ENCODE measurements at regions of chr3 and their contacts with region 1.

Region 1: DNA sequence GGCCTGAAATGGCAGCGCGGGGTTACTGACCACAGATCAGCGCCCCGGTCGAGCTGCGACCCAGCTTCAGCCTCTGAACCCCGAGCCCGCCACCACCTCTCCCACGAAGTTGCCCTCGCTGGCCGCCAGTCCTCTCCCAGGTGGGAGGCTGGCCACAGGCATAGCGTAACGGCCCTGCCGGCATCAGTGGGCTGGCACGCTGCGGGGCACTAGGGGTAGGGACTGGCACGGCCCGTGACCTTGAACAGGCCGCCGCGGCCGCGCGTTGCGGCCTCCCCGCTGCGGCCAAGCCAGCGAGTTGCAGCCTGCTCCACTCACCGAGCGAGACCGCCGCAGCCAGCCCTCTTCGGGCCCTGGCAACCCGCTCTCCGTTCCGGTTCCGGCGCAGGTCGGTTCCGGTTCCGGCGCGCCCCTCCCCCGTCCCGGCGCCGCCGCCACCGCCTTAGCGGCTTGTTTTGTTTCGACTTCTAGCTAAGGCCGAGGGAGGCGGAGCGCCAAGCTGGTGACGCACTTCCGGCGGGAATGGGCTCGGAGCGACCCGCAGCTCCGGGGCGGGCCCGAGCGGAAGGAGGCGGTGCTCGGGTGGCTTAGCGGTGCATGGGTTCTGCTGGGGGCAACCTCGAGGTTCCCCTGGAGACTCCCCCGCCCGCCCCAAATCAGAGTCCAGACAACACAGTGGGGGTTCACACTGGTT is at the start of gene USP19:
- DNase-seq: peak; percentile 97
- ATAC-seq: peak; percentile 95
- H3K4me3 ChIP-seq: peak within 1 kb of the TSS; percentile 67 to 85 (median 74)
- H3K4me3 Mint-ChIP-seq: peak within 1 kb of the TSS; percentile 88
- H3K27ac ChIP-seq: peak within 1 kb of the TSS; percentile 82 to 92
- H3K27ac Mint-ChIP-seq: peak within 1 kb of the TSS; percentile 89
- H3K4me1 ChIP-seq: peaks cover 12 to 21% of the 10 kb centered on the region in 2 donors
- H3K4me1 Mint-ChIP-seq: peaks cover 15% of the 10 kb centered on the region
- H3K27me3 ChIP-seq: no peaks in the 10 kb centered on the region
- H3K27me3 Mint-ChIP-seq: no peaks in the 10 kb centered on the region
- CTCF ChIP-seq: no peak
- total RNA-seq, gene USP19: 87.3 and 89.9 TPM in 2 replicates

Region 2: DNA sequence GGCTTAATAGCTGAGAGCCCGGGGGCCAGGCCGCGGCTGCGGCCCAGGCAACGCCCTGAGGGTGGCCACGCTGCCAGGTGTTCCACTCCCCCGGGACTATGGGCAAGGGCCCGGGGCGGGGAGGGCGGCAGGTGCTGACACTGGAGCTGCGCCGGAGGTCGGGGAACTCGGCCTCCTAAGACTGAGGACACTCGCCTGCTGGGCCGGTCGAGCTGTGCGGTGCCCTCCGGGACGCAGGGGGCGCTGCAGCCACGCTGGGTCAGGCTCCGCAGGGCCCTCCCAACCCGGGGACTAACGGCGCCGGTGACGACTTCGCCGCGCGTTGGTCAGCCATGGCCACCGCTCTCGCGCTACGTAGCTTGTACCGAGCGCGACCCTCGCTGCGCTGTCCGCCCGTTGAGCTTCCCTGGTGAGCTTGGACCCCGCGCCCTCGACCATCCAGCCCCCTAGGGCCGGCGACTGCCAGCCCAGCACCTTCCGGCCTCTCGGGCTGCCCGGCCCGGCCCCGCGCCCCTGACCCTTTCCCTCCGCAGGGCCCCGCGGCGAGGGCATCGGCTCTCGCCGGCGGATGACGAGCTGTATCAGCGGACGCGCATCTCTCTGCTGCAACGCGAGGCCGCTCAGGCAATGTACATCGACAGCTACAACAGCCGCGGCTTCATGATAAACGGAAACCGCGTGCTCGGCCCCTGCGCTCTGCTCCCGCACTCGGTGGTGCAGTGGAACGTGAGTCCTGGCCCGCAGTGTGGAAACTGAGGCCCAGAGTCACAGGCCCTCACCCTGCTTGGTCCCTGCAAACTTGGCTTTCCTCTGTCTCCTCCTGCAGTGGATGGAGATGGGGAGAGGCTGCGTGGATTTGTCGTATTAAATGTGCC is 98.5 kb before region 1 on chr3 and contains the start of gene NDUFAF3:
- CTCF ChIA-PET with region 1: no interaction called
- POLR2A ChIA-PET with region 1: interaction called, 14 read pairs
- intact Hi-C with region 1: loop called (anchors 1 kb)
- DNase-seq: peak; percentile 96
- ATAC-seq: peak; percentile 66
- H3K4me3 ChIP-seq: peak within 1 kb of the TSS; percentile 66 to 92 (median 89)
- H3K4me3 Mint-ChIP-seq: peak within 1 kb of the TSS; percentile 96
- H3K27ac ChIP-seq: peak within 1 kb of the TSS; percentile 96 to 98
- H3K27ac Mint-ChIP-seq: peak within 1 kb of the TSS; percentile 97
- H3K4me1 ChIP-seq: peaks cover 36 to 60% of the 10 kb centered on the region in 2 donors
- H3K4me1 Mint-ChIP-seq: peaks cover 65% of the 10 kb centered on the region
- H3K27me3 ChIP-seq: no peaks in the 10 kb centered on the region
- H3K27me3 Mint-ChIP-seq: no peaks in the 10 kb centered on the region
- CTCF ChIP-seq: peak; percentile 95
- total RNA-seq, gene NDUFAF3: 67.0 and 67.5 TPM in 2 replicates

Region 3: GRCh38 chr3:49032646-49033304 is 87.8 kb before region 1 on chr3:
- CTCF ChIA-PET with region 1: no interaction called
- POLR2A ChIA-PET with region 1: no interaction called
- intact Hi-C with region 1: no loop called
- DNase-seq: no peak
- ATAC-seq: no peak
- H3K4me3 ChIP-seq: no peak overlapping the region
- H3K4me3 Mint-ChIP-seq: no peak overlapping the region
- H3K27ac ChIP-seq: no peak overlapping the region
- H3K27ac Mint-ChIP-seq: no peak overlapping the region
- H3K4me1 ChIP-seq: peaks cover 11 to 20% of the 10 kb centered on the region in 2 donors
- H3K4me1 Mint-ChIP-seq: peaks cover 20% of the 10 kb centered on the region
- H3K27me3 ChIP-seq: no peaks in the 10 kb centered on the region
- H3K27me3 Mint-ChIP-seq: no peaks in the 10 kb centered on the region
- CTCF ChIP-seq: no peak

Region 4: DNA sequence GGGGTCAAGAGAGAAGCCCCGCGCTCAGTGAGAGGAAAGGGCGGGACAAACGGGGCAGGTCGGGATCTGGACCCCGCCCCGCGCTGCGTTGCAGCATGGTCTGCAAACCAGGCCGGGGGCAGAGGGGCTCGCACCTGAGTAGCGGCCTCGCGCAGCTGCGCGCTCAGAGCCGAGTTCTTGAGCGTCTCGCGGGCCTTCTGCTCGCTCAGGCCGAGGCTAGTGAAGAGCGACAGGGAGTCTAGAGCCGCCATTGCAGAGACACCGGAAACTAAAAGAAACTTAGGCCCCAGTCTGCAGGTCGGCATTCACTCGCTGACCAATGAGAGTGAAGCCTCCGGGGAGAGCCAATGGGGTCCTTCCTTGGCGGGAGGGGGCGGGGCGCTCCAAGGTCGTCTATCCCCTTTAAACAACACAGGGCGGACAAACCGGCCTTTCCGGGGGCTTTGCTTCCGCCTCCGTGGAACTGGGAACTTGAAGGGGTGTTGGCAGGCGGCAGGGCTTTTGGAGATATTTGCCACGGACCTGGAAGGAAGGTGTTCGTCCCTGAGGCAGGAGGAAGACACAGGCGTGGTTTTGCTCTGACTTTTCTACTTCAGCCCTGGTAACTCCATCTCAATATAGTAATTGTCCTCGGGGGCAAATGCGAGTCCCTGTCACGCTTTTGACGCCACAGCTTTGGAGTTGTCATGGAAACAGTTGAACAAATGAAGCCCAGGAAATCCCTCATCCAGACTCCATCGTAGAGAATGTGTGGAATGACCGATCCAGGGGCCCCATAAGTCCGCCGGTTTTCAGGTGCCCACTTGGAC is 15.9 kb before region 1 on chr3 and contains the start of gene QARS1:
- CTCF ChIA-PET with region 1: interaction called, 4 read pairs
- POLR2A ChIA-PET with region 1: interaction called, 7 read pairs
- intact Hi-C with region 1: loop called (anchors 1 kb)
- DNase-seq: peak; percentile 90
- ATAC-seq: peak; percentile 99
- H3K4me3 ChIP-seq: peak within 1 kb of the TSS; percentile 72 to 98 (median 93)
- H3K4me3 Mint-ChIP-seq: peak within 1 kb of the TSS; percentile 95
- H3K27ac ChIP-seq: peak within 1 kb of the TSS; percentile 61 to 81
- H3K27ac Mint-ChIP-seq: peak within 1 kb of the TSS; percentile 94
- H3K4me1 ChIP-seq: peaks cover 11 to 18% of the 10 kb centered on the region in 2 donors
- H3K4me1 Mint-ChIP-seq: peaks cover 27% of the 10 kb centered on the region
- H3K27me3 ChIP-seq: no peaks in the 10 kb centered on the region
- H3K27me3 Mint-ChIP-seq: no peaks in the 10 kb centered on the region
- CTCF ChIP-seq: no peak
- total RNA-seq, gene QARS1: 252 and 282 TPM in 2 replicates

Region 5: GRCh38 chr3:49165771-49166751 is 45.5 kb after region 1 on chr3 and contains the start of gene CCDC71:
- CTCF ChIA-PET with region 1: interaction called, 7 read pairs
- POLR2A ChIA-PET with region 1: interaction called, 6 read pairs
- intact Hi-C with region 1: loop called (anchors 2 kb)
- DNase-seq: peak; percentile 84
- ATAC-seq: peak; percentile 73
- H3K4me3 ChIP-seq: peak within 1 kb of the TSS; percentile 55 to 97 (median 82)
- H3K4me3 Mint-ChIP-seq: peak within 1 kb of the TSS; percentile 90
- H3K27ac ChIP-seq: peak within 1 kb of the TSS; percentile 50 to 71
- H3K27ac Mint-ChIP-seq: peak within 1 kb of the TSS; percentile 94
- H3K4me1 ChIP-seq: peaks cover 25 to 31% of the 10 kb centered on the region in 2 donors
- H3K4me1 Mint-ChIP-seq: peaks cover 28% of the 10 kb centered on the region
- H3K27me3 ChIP-seq: peaks cover 0 to 7% (median 1%) of the 10 kb centered on the region in 4 experiments
- H3K27me3 Mint-ChIP-seq: peaks cover 7% of the 10 kb centered on the region
- CTCF ChIP-seq: no peak
- total RNA-seq, gene CCDC71: 29.7 and 30.0 TPM in 2 replicates

Measured in B cell (primary cell).